ENCODE measurements at regions of chr10 and their contacts with region 1.

Region 1: GRCh38 chr10:108204479-108205305 is 1040.2 kb upstream of the SORCS1 start:
- DNase-seq: no peak
- H3K4me3 ChIP-seq: no peak overlapping the region
- H3K27ac ChIP-seq: no peak overlapping the region
- H3K4me1 ChIP-seq: no peaks in the 10 kb centered on the region
- H3K27me3 ChIP-seq: no peaks in the 10 kb centered on the region
- CTCF ChIP-seq: peak; percentile 57

Region 2: DNA sequence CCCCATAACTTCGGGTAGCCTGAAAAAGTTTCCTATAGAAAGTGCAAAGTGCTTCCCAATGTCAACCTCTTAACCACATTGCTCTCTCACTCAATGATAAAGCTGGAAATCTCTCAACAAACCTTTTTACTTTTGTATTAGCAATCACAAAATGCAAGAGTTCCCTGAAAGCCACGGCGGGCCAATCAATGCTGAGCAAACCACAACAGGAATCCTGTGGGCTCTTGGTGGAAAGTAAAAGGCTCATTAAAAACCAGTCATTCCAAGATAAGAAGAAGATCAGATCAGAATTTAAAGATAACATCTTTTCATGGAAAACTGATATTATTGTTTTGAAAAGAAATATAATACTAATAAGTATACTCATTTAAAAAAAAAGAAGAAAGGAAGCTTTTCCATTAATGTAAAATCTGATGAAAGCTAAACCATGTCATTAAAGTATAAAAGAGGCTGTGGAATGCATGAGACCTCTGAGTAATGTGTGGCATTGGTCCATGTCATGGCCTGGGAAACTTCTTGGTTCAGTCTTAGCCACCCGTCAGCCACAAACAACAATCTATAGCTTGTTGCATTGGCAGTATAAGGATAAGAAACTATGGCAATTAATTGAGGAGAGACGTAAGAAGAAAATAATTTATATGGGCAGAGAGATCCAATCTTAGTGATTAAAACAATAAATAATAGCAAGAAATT is 25.9 kb after region 1 on chr10:
- CTCF ChIA-PET with region 1: interaction called, 14 read pairs
- POLR2A ChIA-PET with region 1: no interaction called
- intact Hi-C with region 1: no loop called
- DNase-seq: no peak
- H3K4me3 ChIP-seq: no peak overlapping the region
- H3K27ac ChIP-seq: no peak overlapping the region
- H3K4me1 ChIP-seq: no peaks in the 10 kb centered on the region
- H3K27me3 ChIP-seq: no peaks in the 10 kb centered on the region
- CTCF ChIP-seq: no peak

Measured in PC-9 (cell line).